CD4-positive, alpha-beta memory T cell (primary cell): ENCODE measurements at regions of chr6 and their contacts with region 1.

Region 1: DNA sequence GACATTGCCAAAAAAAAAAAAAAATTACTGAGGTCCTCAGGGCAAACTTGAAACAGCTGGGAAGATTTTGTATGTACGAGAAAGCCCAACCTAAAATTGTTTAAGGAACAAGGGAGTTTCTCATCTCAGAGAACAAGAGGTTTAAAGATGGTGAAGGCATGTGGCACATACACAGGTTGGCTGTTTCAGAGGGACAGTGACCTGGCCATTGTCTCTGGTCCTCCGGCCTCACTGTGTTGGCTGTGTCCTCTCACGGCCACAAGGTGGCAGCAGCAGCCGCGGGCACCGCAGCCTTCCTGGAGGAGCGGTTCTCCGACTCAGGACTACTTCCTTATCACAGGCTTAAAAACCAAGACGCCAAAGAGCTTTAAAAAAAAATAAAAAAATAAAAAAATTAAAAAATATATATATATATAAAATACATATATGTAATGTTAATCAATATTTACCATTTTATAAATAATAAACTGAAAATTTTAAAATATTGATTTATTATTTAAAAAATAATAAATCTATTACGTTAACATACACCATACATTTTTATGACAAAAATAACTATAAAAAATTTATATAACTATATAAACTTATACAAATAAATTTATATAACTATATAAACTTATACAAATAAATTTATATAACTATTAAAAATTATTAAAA is 52.8 kb downstream of the GTF2H5 start:
- DNase-seq: peak; percentile 56 to 69 (median 67)
- H3K4me3 ChIP-seq: no peak overlapping the region
- H3K4me3 Mint-ChIP-seq: no peak overlapping the region
- H3K27ac ChIP-seq: no peak overlapping the region
- H3K27ac Mint-ChIP-seq: peak overlapping the region in 1 of 7 donors; percentile 35
- H3K4me1 ChIP-seq: no peaks in the 10 kb centered on the region
- H3K4me1 Mint-ChIP-seq: peaks cover 1 to 4% (median 2%) of the 10 kb centered on the region in 4 donors
- H3K27me3 ChIP-seq: no peaks in the 10 kb centered on the region
- H3K27me3 Mint-ChIP-seq: no peaks in the 10 kb centered on the region

Region 2: DNA sequence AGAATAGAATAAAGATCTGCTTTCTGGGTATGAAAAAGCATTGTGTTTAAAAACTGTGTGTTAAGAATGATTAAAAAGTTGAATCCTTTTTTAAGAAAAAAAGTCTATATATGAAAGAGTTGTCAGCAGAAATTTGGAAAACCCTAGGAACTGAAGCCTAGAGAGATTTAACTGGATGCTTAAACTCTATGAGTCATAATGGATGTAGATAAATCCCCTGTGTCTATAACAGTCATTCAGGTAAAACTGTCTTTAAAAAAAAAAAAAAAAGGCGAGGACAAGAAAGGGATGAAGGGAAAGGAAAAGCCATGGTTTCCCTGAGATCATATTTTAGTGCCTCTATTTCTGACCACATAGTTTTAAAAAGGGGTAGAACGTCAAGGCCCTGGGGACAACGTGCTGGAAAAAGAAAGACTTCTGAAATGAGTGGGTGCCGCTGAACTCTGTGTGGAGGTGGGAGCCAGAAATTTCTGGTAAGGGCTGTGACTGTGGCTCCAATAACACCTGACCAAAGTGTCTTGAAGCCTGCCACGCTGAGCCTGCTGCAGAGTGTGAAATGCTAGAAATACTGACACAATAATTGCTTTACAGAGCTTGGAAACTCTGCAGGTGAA is 1746.3 kb before region 1 on chr6:
- CTCF ChIA-PET with region 1: no interaction called
- POLR2A ChIA-PET with region 1: no interaction called
- intact Hi-C with region 1: no loop called
- DNase-seq: no peak
- H3K4me3 ChIP-seq: no peak overlapping the region
- H3K4me3 Mint-ChIP-seq: peak overlapping the region in 4 of 8 donors; percentile 12 to 62 (median 24)
- H3K27ac ChIP-seq: no peak overlapping the region
- H3K27ac Mint-ChIP-seq: peak overlapping the region in 2 of 7 donors; percentile 36 to 69
- H3K4me1 ChIP-seq: no peaks in the 10 kb centered on the region
- H3K4me1 Mint-ChIP-seq: peaks cover 5 to 8% (median 6%) of the 10 kb centered on the region in 4 donors
- H3K27me3 ChIP-seq: no peaks in the 10 kb centered on the region
- H3K27me3 Mint-ChIP-seq: no peaks in the 10 kb centered on the region

Region 3: DNA sequence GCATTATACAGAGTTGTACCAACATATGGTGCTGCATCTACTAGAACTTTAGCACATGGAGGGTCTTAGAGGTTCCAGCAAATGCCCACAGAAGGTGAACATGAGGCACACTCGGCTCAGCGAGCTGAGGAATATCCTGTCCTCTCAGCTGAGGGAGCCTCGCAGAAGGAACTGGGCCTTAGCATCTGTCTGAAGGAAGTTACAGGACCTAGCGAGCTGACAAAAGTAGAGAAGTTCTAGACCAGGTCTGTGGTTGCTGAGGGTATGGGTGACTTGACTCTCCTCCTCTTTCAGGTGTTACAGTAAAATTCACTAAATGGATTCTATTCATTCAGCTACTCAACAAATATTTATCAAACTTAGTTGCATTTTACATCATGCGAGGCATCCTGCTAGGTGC is 682.7 kb before region 1 on chr6:
- CTCF ChIA-PET with region 1: no interaction called
- POLR2A ChIA-PET with region 1: no interaction called
- intact Hi-C with region 1: no loop called
- DNase-seq: no peak
- H3K4me3 ChIP-seq: no peak overlapping the region
- H3K4me3 Mint-ChIP-seq: peak overlapping the region in 1 of 8 donors; percentile 14
- H3K27ac ChIP-seq: no peak overlapping the region
- H3K27ac Mint-ChIP-seq: peak overlapping the region in 6 of 7 donors; percentile 54 to 87 (median 72)
- H3K4me1 ChIP-seq: peaks cover 41% of the 10 kb centered on the region
- H3K4me1 Mint-ChIP-seq: peaks cover 25 to 46% (median 37%) of the 10 kb centered on the region in 4 donors
- H3K27me3 ChIP-seq: no peaks in the 10 kb centered on the region
- H3K27me3 Mint-ChIP-seq: no peaks in the 10 kb centered on the region

Region 4: GRCh38 chr6:157898169-157898568 is 322.7 kb before region 1 on chr6:
- CTCF ChIA-PET with region 1: no interaction called
- POLR2A ChIA-PET with region 1: no interaction called
- intact Hi-C with region 1: no loop called
- DNase-seq: no peak
- H3K4me3 ChIP-seq: no peak overlapping the region
- H3K4me3 Mint-ChIP-seq: no peak overlapping the region
- H3K27ac ChIP-seq: no peak overlapping the region
- H3K27ac Mint-ChIP-seq: peak overlapping the region in 5 of 7 donors; percentile 7 to 57 (median 23)
- H3K4me1 ChIP-seq: peaks cover 2% of the 10 kb centered on the region
- H3K4me1 Mint-ChIP-seq: peaks cover 2 to 14% (median 3%) of the 10 kb centered on the region in 4 donors
- H3K27me3 ChIP-seq: no peaks in the 10 kb centered on the region
- H3K27me3 Mint-ChIP-seq: no peaks in the 10 kb centered on the region

Region 5: GRCh38 chr6:158270389-158271127 is 49.6 kb after region 1 on chr6:
- CTCF ChIA-PET with region 1: interaction called, 15 read pairs
- POLR2A ChIA-PET with region 1: no interaction called
- intact Hi-C with region 1: no loop called
- DNase-seq: no peak
- H3K4me3 ChIP-seq: no peak overlapping the region
- H3K4me3 Mint-ChIP-seq: peak overlapping the region; percentile 15 to 68 (median 29)
- H3K27ac ChIP-seq: peak overlapping the region; percentile 20
- H3K27ac Mint-ChIP-seq: peak overlapping the region; percentile 27 to 81 (median 66)
- H3K4me1 ChIP-seq: peaks cover 19% of the 10 kb centered on the region
- H3K4me1 Mint-ChIP-seq: peaks cover 11 to 40% (median 22%) of the 10 kb centered on the region in 4 donors
- H3K27me3 ChIP-seq: no peaks in the 10 kb centered on the region
- H3K27me3 Mint-ChIP-seq: no peaks in the 10 kb centered on the region

Region 6: DNA sequence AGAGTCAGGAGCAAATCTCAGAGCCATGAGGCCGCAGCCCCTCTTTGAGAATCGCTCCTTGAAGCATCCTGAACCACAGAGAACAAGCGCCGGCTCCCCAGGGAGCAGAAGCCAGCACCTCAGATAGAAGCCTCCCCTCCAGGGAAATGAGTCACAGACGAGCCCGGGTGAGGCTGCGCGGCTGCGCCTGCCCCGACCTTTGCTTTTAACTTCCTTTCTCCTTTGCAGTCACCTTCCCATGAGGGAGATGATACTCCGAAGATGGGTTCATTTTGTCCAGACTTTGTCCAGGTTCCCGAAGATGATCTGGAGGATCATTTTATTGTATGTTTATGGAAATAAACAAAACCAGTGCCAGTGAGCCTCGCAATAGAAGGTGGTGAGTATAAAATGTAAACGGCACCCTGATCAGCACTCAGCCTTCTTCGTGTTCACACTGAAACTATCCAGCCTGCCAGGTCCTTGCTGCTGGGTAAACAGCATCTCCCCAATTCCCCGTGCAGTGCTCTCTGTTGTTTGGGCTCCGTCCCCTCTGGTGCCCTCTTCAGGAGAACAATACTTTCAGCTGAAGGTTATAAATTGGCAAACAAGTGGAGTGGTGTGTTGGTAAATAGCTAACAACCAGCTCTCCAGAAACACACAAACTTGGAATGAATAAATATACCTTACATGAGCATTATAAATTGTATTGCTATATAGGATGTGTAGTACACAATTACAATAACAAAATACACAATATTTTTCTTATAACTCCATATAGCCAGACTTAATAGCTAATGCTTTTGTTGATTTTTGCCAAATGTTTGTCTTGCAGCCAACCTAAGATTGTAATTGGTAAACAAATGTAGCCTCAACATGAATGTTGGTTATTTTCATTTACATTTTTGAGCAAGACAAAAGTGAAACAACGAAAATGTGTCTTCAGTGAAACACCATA is 297.5 kb after region 1 on chr6:
- CTCF ChIA-PET with region 1: interaction called, 10 read pairs
- POLR2A ChIA-PET with region 1: no interaction called
- intact Hi-C with region 1: loop called (anchors 1 kb)
- DNase-seq: peak; percentile 57 to 68 (median 64)
- H3K4me3 ChIP-seq: peak overlapping the region; percentile 20 to 51
- H3K4me3 Mint-ChIP-seq: peak overlapping the region; percentile 79 to 90 (median 86)
- H3K27ac ChIP-seq: no peak overlapping the region
- H3K27ac Mint-ChIP-seq: peak overlapping the region; percentile 62 to 93 (median 80)
- H3K4me1 ChIP-seq: peaks cover 33% of the 10 kb centered on the region
- H3K4me1 Mint-ChIP-seq: peaks cover 22 to 41% (median 31%) of the 10 kb centered on the region in 4 donors
- H3K27me3 ChIP-seq: no peaks in the 10 kb centered on the region
- H3K27me3 Mint-ChIP-seq: peaks cover 2 to 6% of the 10 kb centered on the region in 2 donors

Region 7: DNA sequence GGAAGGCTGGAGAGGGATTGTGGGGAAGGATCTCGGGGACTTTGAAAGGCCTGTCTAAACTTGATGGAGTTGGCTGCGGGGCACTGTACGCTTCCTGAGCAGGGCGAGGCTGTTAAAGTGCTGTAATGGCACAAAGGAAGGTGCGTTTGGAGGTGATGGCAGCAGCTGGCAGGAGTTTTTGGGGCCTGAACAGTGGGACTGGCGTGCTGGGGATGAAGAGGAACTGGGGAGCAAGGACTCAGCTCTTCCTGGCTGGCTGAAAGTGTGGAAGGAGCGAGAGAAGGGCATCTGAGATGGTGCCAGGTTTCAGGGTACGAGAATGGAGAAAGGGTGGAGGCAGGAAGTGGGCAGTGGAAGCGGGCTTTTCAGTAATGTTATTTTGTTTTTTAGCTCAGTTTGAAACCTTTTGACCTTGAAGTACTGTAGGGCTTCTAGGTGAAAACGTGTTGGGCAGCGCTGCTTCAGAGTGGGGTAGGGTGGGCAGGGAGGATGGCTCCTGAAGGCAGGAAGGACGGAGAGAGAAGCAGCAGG is 347.0 kb after region 1 on chr6:
- CTCF ChIA-PET with region 1: interaction called, 11 read pairs
- POLR2A ChIA-PET with region 1: interaction called, 5 read pairs
- intact Hi-C with region 1: no loop called
- DNase-seq: peak in 4 of 5 donors; percentile 10 to 32 (median 24)
- H3K4me3 ChIP-seq: peak overlapping the region in 1 of 2 donors; percentile 36
- H3K4me3 Mint-ChIP-seq: peak overlapping the region; percentile 66 to 90 (median 86)
- H3K27ac ChIP-seq: peak overlapping the region; percentile 50
- H3K27ac Mint-ChIP-seq: peak overlapping the region; percentile 87 to 97 (median 95)
- H3K4me1 ChIP-seq: peaks cover 79% of the 10 kb centered on the region
- H3K4me1 Mint-ChIP-seq: peaks cover 58 to 90% (median 76%) of the 10 kb centered on the region in 4 donors
- H3K27me3 ChIP-seq: no peaks in the 10 kb centered on the region
- H3K27me3 Mint-ChIP-seq: no peaks in the 10 kb centered on the region

Region 8: DNA sequence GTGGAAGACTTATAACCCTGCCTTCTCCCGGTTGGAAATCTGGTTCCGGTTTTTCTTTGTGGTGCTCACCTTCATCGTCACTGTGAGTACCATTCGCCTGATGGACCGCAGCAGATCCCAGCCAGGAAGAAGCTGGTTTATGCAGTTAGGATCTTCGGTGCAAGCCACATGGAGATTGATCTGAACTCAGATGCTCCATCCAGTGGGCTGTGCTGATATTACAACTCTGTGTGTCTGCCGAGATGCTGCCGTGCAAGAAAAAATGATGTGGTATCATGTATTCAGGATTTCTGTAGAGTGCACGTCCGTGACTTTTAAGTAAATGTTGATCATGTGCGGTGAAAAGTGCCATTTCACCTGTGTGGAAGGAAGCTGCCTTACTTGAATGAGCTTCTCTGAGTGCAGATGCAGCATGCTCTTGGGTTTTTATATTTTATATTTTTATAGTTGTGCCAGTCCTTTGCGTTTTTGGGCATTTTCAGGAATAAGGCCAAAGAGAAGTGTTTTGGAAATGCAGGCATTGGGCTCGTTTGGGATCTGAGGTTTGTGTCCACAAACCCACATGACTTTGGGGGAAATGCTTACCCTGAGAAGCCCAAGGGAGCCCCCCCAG is 384.5 kb after region 1 on chr6:
- CTCF ChIA-PET with region 1: interaction called, 22 read pairs
- POLR2A ChIA-PET with region 1: no interaction called
- intact Hi-C with region 1: loop called (anchors 1 kb)
- DNase-seq: peak; percentile 36 to 53 (median 51)
- H3K4me3 ChIP-seq: no peak overlapping the region
- H3K4me3 Mint-ChIP-seq: no peak overlapping the region
- H3K27ac ChIP-seq: no peak overlapping the region
- H3K27ac Mint-ChIP-seq: peak overlapping the region in 5 of 7 donors; percentile 7 to 80 (median 76)
- H3K4me1 ChIP-seq: no peaks in the 10 kb centered on the region
- H3K4me1 Mint-ChIP-seq: peaks cover 5 to 15% (median 14%) of the 10 kb centered on the region in 4 donors
- H3K27me3 ChIP-seq: no peaks in the 10 kb centered on the region
- H3K27me3 Mint-ChIP-seq: no peaks in the 10 kb centered on the region

Region 9: DNA sequence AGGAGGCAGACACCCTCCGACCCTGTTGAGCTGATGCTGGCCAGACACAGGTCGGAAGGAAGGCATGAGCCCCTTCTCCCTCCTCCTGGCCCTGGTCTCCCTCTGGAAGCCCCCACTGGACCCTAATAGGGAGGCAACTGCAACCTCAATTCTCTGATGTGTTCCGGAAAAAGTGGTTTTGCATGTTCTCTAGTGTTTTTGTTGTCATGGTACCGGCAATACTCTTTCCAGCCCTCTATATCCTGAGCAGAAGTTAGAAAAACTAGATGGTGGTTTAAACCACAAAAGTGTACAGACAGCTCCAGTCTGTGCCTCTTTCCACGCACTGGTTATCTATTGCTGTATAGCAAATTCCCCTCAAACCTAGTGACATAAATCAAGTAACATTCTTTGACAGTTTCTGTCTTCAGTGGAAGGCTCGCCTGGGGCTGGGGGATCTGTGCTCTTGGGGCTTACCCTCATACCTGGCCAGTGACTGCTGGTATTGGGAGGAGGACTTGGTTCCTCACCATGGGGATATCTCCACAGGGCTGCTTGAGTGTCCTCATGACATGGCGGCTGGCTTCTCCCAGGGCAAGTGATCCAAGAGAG is 466.0 kb after region 1 on chr6:
- CTCF ChIA-PET with region 1: interaction called, 27 read pairs
- POLR2A ChIA-PET with region 1: interaction called, 5 read pairs
- intact Hi-C with region 1: loop called (anchors 1 kb)
- DNase-seq: peak; percentile 84 to 92 (median 87)
- H3K4me3 ChIP-seq: peak overlapping the region in 1 of 2 donors; percentile 25
- H3K4me3 Mint-ChIP-seq: peak overlapping the region; percentile 53 to 91 (median 80)
- H3K27ac ChIP-seq: peak overlapping the region; percentile 85
- H3K27ac Mint-ChIP-seq: peak overlapping the region; percentile 98 to 100 (median 100)
- H3K4me1 ChIP-seq: peaks cover 65% of the 10 kb centered on the region
- H3K4me1 Mint-ChIP-seq: peaks cover 43 to 77% (median 58%) of the 10 kb centered on the region in 4 donors
- H3K27me3 ChIP-seq: no peaks in the 10 kb centered on the region
- H3K27me3 Mint-ChIP-seq: no peaks in the 10 kb centered on the region